GM18951 (cell line): ENCODE measurements at regions of chr2 and their contacts with region 1.

Region 1: DNA sequence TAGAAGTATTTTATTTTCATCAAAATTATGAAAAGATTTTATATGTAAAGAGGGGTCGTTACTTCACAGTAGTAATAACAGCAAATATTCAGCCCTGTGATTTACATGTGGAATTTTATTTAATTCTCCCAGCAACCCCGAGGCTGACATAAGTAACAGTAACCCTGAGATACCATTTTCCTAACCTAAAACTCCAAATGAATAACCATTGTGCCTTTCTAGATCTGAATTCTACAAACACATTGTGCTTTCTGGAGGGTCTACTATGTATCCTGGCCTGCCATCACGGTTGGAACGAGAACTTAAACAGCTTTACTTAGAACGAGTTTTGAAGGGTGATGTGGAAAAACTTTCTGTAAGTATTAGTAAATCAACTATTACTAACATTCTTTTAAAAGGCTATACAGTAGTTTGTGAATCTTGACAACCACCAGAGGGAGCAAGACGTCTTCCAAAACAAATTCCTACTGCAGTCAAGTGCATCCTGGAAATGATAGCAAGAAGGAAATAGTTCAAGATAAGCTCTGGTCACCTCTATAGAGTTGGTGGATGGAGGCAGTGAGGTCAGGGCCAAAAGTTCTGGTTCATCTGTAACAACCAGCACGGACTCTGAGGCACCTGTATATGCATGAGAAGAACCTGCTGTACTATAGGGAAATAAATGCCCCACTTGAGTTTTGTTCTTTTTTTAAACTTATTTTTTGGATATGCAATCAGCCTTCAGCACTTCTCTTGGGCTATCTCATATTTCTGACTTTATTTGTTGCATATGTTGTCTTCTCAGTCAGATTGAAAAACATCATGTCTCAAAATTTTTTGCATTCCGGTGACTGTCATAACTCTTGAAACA is 37.4 kb downstream of the ACTR2 start:
- POLR2A ChIP-seq: no peak

Region 2: GRCh38 chr2:65545837-65546805 is 281.1 kb after region 1 on chr2:
- in situ Hi-C with region 1: loop called (anchors 10 kb)
- POLR2A ChIP-seq: no peak